ENCODE measurements at regions of chr14 and their contacts with region 1.

Region 1: GRCh38 chr14:23120541-23121251 is 1.6 kb upstream of the CEBPE start:
- DNase-seq: peak; percentile 90 to 96 (median 95)
- ATAC-seq: peak; percentile 84 to 87
- H3K4me3 ChIP-seq: no peak overlapping the region
- H3K27ac ChIP-seq: no peak overlapping the region
- H3K4me1 ChIP-seq: peaks cover 3% of the 10 kb centered on the region
- H3K27me3 ChIP-seq: no peaks in the 10 kb centered on the region

Region 2: DNA sequence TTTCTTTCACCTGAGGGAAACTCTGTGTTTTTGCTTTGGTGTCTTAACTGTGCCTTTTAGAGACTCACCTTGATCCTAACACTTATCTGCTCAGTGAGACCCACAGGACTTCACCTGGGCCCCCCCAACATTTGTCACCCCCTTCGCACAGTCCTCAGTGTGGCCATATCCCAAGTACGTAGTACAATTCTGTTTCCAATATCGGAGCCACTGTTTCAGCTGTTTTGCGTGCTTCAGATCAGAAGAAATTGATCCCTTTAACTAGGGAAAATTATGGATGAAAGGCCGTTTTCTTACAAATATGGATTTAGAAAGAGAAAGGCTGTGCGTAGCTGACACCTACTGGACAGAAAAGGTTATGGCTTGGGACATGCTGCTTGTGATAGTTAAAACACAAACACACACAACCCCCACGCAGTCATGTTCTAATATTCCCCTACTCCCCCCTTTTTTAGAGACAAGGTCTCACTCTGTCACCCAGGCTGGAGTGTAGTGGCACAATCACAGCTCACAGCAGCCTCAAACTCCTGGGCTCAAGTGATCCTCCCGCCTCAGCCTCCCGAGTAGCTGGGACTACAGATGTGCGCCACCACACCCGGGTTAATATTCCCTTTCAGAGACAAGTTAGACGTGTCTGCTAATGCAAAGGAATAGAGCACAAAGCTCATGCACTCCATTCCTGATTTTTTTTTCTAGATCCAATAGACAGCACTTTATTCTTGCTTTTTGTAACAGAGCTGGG is 66.4 kb after region 1 on chr14:
- intact Hi-C with region 1: loop called (anchors 1 to 2 kb)
- DNase-seq: no peak
- ATAC-seq: peak; percentile 54 to 59
- H3K4me3 ChIP-seq: no peak overlapping the region
- H3K27ac ChIP-seq: no peak overlapping the region
- H3K4me1 ChIP-seq: no peaks in the 10 kb centered on the region
- H3K27me3 ChIP-seq: no peaks in the 10 kb centered on the region

Region 3: DNA sequence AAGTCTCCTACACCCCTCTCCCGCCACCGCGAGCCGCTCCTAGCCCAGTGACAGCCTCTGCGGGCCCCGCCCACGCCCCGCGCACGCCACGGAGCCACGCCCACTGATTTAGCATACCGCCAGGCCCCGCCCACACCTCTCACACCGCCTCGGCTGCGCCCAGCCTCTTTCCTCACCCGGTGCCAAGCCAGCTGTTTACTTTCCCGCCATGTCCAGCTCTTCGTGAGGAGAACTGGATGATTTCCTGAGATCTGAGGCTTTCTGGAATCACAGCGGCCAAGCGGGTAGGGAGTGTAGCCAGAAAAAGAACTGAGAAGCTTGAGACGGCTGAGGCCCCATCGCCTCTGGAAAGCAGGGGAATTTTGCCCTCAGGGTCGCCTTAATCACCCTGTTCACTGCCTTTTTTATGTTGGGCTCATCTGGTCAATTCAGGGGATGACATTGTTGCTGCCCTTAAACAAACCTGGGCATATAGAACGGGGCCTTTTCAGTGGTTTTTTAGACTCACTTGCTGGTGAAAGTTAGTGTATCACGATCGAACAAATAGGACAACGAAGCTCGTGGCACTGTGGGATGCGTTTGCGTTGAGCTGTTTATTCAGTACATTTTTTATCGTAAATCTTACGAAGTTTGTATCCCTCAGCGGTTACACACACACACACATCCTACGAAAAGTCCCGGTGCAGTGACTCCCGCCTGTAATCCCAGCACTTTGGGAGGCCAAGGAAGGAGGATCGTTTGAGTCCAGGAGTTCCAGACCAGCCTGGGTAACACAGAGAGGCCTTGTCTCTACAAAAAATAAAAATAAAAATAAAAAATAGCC is 117.3 kb after region 1 on chr14 and contains the start of gene RNF212B:
- intact Hi-C with region 1: no loop called
- DNase-seq: peak; percentile 94 to 98 (median 97)
- ATAC-seq: peak; percentile 100
- H3K4me3 ChIP-seq: no peak within 1 kb of the TSS
- H3K27ac ChIP-seq: no peak within 1 kb of the TSS
- H3K4me1 ChIP-seq: no peaks in the 10 kb centered on the region
- H3K27me3 ChIP-seq: no peaks in the 10 kb centered on the region
- total RNA-seq, gene RNF212B: not detected

Region 4: GRCh38 chr14:23294734-23295561 is 174.3 kb after region 1 on chr14:
- intact Hi-C with region 1: loop called in 1 of 4 experiments (anchors 10 kb)
- DNase-seq: peak in 2 of 3 donors; percentile 41 to 78
- ATAC-seq: peak; percentile 52 to 62
- H3K4me3 ChIP-seq: no peak overlapping the region
- H3K27ac ChIP-seq: no peak overlapping the region
- H3K4me1 ChIP-seq: peaks cover under 1% of the 10 kb centered on the region
- H3K27me3 ChIP-seq: no peaks in the 10 kb centered on the region